AG04450 (cell line): ENCODE measurements at regions of chr17 and their contacts with region 1.

Region 1: GRCh38 chr17:7004398-7005253 is 7.8 kb upstream of the RNASEK start:
- DNase-seq: no peak
- H3K4me3 ChIP-seq: no peak overlapping the region
- H3K27ac ChIP-seq: no peak overlapping the region
- H3K27me3 ChIP-seq: no peaks in the 10 kb centered on the region
- CTCF ChIP-seq: peak; percentile 69

Region 2: DNA sequence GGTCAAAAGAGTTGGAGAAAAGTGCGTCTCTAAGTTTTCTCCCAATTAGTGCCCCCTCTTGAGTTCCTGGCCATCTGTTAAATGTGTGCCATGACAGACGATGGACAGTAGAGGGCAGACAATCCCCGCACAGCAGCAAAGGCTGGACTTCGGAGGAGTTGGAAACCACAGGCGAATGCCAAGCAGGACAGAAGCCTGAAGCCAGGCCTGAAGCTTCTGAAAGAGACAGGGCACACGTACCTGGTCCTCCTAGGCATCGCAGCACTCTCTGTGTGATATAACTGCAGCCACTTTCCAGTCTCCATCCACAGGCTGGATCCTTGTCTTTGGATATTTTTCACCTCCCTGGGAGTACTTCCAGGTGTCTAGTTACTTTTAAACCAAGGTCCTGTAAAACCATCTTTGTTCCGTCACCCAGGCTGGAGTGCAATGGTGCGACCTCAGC is 338.5 kb before region 1 on chr17:
- CTCF ChIA-PET with region 1: interaction called, 15 read pairs
- POLR2A ChIA-PET with region 1: no interaction called
- DNase-seq: peak; percentile 60
- H3K4me3 ChIP-seq: no peak overlapping the region
- H3K27ac ChIP-seq: no peak overlapping the region
- H3K27me3 ChIP-seq: peaks cover 28% of the 10 kb centered on the region
- CTCF ChIP-seq: peak; percentile 98

Region 3: DNA sequence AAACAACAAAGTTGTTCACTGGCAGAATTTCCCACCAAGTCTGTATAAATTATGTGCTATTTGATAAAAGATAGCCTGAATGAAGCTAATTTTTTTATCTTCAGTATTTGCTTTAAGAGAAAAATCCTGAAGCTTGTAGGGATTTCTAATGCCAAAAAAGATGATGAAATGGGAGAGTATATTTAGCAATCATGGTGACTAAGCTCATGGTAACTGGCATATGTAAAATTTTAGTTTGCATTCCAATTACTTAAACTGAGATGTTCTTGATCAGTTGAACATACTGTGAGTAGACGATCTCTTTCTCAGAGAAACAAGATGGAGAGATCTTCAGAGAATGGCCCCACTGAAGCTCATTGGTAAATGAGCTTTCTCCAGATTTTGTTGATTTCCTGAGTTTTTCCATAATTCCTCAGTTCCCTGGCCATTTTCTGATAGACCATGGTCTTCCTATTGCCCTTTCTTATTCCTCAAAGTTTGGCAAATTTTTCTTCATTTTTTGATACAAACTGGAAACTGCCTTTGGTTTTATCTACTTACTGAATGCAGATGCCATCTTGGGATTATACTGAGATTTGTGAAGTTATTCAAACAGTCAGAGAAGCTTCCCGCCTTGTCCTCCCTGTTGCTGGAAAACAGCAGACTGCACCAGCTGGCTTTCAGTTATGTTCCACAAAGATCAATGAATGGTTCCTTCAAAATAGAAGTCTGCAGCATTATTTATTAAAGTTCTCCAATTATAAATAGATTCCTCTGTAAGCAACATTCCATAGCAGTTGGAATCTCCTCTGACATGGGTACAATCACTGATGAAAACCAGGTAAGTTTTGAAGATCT is 77.1 kb before region 1 on chr17:
- CTCF ChIA-PET with region 1: interaction called, 11 read pairs
- POLR2A ChIA-PET with region 1: no interaction called
- DNase-seq: peak; percentile 6
- H3K4me3 ChIP-seq: no peak overlapping the region
- H3K27ac ChIP-seq: no peak overlapping the region
- H3K27me3 ChIP-seq: peaks cover 4% of the 10 kb centered on the region
- CTCF ChIP-seq: no peak

Region 4: DNA sequence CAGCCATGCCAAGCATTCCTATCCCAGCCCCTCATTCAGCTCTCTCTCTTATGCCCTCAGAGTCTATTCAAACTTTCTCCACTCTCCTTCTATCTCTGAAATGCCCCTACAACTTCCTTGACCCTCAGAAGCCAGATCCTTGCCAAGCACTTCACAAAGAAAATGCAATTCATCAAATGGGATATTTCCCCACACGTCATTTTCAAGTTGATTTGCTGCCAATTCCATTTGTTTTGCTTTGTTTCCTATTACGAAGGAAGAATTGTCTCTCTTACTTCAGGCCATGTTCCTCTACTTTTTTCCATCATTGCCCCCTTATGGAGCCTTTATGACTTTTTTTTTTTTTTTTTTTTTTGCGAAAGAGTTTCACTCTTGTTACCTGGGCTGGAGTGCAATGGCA is 17.9 kb before region 1 on chr17:
- CTCF ChIA-PET with region 1: interaction called, 10 read pairs
- POLR2A ChIA-PET with region 1: no interaction called
- DNase-seq: no peak
- H3K4me3 ChIP-seq: no peak overlapping the region
- H3K27ac ChIP-seq: no peak overlapping the region
- H3K27me3 ChIP-seq: no peaks in the 10 kb centered on the region
- CTCF ChIP-seq: no peak

Region 5: GRCh38 chr17:7060165-7060891 is 55.7 kb after region 1 on chr17:
- CTCF ChIA-PET with region 1: no interaction called
- POLR2A ChIA-PET with region 1: no interaction called
- DNase-seq: no peak
- H3K4me3 ChIP-seq: no peak overlapping the region
- H3K27ac ChIP-seq: no peak overlapping the region
- H3K27me3 ChIP-seq: peaks cover 8% of the 10 kb centered on the region
- CTCF ChIP-seq: no peak